Lower leg skin (tissue), 4 donors: ENCODE measurements at regions of chr4 and their contacts with region 1.

Region 1: DNA sequence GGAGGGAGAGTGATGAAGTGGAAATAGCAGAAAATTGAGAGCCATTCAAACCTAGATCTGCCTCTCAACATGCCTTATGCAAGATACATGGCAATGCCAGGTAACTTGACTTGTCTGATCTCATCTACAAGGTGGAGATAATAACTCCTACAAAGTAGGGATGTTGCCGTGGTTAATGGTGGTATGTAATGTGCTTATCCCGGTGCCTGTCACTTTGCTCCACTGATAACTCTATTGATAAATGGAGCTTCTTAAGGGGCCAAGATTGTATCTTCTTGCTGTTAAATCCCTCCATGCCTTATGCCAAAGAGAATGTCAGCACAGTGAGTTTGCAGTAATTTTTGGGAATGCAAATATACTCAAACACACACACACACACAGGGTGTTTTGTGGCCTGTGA is 355.8 kb downstream of the MAPK10 start:
- DNase-seq: no peak
- H3K4me3 ChIP-seq: no peak overlapping the region
- CTCF ChIP-seq: no peak
- POLR2A ChIP-seq: no peak

Region 2: DNA sequence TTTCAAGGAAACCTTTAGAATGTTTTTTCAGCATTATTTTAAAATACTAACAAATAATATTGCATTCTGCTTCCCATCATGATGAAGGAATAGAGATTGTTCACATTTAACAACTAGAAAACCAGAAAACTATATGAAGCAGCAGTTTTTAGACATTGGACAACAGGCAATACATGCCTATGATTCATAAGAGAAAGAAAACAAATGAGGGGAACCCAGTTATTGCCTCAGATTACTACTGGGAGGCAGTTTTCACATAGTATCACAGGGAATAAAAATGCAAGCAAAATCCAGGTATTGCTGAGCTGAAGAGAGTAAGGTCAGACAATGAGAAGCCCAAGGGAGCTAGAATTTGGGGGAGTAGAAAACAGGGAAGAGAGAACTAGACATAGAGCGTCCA is 17.8 kb before region 1 on chr4:
- intact Hi-C with region 1: loop called (anchors 1 kb)
- DNase-seq: no peak
- H3K4me3 ChIP-seq: no peak overlapping the region
- CTCF ChIP-seq: no peak
- POLR2A ChIP-seq: no peak